ENCODE measurements at regions of chr11 and their contacts with region 1.

Region 1: GRCh38 chr11:131694526-131695424 is 324.4 kb downstream of the NTM start:
- DNase-seq: peak; percentile 74 to 98 (median 90)

Region 2: DNA sequence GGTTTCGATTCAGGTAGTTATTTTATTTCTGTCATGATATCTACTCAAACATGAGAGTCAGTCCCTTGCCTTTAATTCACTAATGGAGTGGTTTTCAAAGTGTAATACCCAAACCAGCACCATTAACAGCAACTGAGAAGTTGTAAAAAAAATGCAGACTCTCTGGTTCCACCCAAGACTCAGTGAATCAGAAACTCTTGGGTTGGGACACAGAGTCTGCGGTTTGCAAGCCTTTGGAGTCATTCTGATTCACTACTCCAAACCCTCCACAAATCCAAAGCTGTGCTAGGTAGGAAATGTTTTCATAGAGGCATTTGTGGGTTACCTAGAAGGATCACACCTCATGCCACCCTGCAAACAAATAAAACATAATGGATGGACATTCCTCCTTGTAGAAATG is 15.7 kb after region 1 on chr11:
- intact Hi-C with region 1: no loop called
- DNase-seq: no peak

Region 3: GRCh38 chr11:131809203-131809918 is 114.6 kb after region 1 on chr11:
- intact Hi-C with region 1: no loop called
- DNase-seq: no peak

Region 4: GRCh38 chr11:133064152-133064877 is 1369.5 kb after region 1 on chr11:
- intact Hi-C with region 1: loop called (anchors 10 kb)
- DNase-seq: peak; percentile 70 to 96 (median 74)